Activated CD4-positive, alpha-beta T cell treated with anti-CD3 and anti-CD28 coated beads, Interleukin-2, amount 10 ng/mL, durations not matched to agents 7 days and 5 days (primary cell): ENCODE measurements at regions of chr22 and their contacts with region 1.

Region 1: GRCh38 chr22:40067639-40068038 is 72.9 kb downstream of the FAM83F start:
- DNase-seq: no peak
- H3K4me3 Mint-ChIP-seq: no peak overlapping the region
- H3K27ac Mint-ChIP-seq: no peak overlapping the region
- H3K4me1 Mint-ChIP-seq: peaks cover 31% of the 10 kb centered on the region
- H3K27me3 Mint-ChIP-seq: no peaks in the 10 kb centered on the region

Region 2: DNA sequence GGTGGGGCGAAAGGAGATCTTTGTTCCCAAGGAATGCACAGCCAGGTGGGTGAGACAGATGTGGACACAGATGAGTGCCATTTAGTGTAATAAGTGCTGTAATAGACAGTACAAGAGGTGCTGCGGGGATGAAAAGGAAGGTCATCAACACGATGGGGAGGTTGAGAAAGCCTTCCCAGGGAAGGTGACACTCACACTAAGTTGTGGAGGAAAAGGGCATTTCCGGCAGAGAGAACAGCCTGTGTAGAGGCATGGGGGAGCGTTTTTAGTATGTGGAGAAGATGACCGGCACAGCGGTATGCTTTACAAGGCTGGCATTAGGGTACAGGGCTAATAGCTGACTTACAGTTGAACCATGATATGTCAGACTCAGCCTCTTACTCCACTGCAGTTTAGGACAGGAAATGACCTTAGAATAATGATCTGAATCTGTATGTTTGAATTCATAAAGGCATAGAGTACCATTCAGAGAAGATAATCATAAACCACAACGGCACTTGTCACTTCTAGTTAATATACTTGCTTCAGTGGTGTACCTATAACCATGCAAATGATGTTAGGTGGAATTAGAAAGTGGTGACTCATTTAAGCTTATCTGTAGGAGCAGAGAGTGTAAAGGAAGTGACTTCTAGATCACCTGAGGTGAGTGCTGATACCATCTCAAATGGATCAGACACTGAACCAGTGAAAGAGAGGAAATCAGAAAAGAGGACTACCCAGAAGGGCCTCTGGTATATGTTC is 12.3 kb before region 1 on chr22:
- CTCF ChIA-PET with region 1: interaction called, 13 read pairs
- POLR2A ChIA-PET with region 1: no interaction called
- DNase-seq: peak; percentile 49
- H3K4me3 Mint-ChIP-seq: peak overlapping the region; percentile 62
- H3K27ac Mint-ChIP-seq: peak overlapping the region; percentile 96
- H3K4me1 Mint-ChIP-seq: peaks cover 74% of the 10 kb centered on the region
- H3K27me3 Mint-ChIP-seq: no peaks in the 10 kb centered on the region

Region 3: GRCh38 chr22:40560551-40560950 is 492.9 kb after region 1 on chr22:
- CTCF ChIA-PET with region 1: no interaction called
- POLR2A ChIA-PET with region 1: no interaction called
- DNase-seq: no peak
- H3K4me3 Mint-ChIP-seq: no peak overlapping the region
- H3K27ac Mint-ChIP-seq: no peak overlapping the region
- H3K4me1 Mint-ChIP-seq: peaks cover 12% of the 10 kb centered on the region
- H3K27me3 Mint-ChIP-seq: no peaks in the 10 kb centered on the region